ENCODE measurements at regions of chr14 and their contacts with region 1.

Region 1: DNA sequence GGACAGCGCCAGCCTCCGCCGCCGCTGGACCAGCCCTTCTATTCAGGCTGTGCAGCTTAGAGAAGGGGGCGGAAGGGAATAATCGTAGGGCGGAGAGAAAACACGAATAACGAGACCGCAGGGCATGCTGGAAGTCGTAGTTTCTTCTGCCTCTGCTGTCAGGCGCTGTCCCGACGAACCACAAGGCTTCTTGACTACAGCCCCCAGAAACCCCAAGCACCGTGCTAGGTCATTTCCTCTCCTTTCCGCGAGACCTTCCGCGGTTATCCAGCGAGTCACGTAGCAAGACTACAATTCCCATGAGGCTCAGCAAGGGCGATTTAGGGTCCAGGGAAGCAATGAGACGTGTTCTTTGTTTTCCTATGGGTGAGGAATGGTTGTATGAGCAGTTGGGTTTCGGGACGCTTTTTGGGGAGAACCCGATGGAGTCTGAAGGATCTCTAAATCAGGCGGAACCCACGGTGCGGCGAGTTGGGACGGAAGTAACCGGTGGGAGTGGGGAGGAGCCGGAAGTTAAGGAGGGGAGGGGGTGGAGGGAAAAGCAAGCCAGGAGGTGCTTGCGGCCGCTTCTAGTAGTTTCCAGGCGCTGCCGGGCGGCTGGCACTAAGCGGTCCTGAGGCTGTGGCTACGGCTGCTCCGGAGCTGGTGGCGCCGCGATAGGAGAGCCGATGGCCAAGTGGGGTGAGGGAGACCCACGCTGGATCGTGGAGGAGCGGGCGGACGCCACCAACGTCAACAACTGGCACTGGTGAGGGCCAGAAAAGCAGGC is at the starts of genes AHSA1 and VIPAS39:
- DNase-seq: peak; percentile 92 to 100 (median 98)

Region 2: DNA sequence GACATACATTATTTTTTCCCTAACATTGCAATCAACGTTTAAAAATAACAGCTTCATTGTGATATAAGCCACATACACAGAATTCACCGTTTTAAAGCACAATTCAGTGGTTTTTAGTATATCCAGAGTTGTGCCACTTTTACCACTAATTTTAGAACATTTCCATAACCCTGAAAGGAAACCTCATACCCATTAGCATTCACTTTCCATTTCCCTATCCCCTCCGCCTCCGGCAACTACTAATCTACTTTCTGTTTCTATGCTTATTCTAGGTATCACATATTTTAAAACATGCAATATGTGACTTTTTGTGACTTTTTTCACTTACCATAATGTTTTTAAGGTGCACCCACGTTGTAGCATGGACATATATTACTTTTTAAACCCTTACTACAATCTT is 96.5 kb after region 1 on chr14:
- intact Hi-C with region 1: loop called (anchors 5 kb)
- DNase-seq: peak in 1 of 42 donors; percentile 15

Region 3: DNA sequence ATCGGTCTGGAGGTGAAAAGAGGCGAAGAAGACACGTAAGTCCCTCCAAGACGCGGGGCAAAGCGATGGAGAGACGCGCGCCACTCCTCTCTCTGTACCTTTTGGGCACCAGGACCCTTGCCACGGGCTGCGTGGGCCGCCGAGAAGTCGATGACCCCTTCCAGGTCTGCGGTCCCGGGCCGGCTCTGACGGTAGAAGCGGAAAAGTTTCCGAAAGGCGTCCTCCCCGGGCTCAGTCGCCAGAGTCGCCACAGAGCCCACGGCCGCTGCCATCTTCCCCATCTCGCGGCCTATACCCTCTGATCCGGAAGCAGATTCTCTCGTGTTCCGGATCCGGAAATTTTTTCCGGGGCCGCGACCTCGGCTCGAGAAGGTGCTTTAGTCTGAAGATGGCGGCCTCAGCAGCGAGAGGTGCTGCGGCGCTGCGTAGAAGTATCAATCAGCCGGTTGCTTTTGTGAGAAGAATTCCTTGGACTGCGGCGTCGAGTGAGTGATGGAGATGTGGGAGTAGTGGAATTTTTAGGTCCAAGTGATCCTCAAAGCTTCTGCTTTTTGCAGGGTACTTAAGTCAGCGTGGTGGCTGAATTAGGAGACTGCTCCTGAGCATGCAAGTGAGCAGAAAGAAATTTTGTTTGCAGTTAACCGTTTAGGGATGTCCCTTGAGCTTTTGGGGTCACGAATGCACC is 250.2 kb after region 1 on chr14 and contains the starts of genes ALKBH1 and SLIRP:
- intact Hi-C with region 1: loop called (anchors 5 kb)
- DNase-seq: peak; percentile 81 to 97 (median 91)

Measured in head of caudate nucleus (tissue), 42 donors.